Breast epithelium (tissue), 4 donors: ENCODE measurements at regions of chr9 and their contacts with region 1.

Region 1: DNA sequence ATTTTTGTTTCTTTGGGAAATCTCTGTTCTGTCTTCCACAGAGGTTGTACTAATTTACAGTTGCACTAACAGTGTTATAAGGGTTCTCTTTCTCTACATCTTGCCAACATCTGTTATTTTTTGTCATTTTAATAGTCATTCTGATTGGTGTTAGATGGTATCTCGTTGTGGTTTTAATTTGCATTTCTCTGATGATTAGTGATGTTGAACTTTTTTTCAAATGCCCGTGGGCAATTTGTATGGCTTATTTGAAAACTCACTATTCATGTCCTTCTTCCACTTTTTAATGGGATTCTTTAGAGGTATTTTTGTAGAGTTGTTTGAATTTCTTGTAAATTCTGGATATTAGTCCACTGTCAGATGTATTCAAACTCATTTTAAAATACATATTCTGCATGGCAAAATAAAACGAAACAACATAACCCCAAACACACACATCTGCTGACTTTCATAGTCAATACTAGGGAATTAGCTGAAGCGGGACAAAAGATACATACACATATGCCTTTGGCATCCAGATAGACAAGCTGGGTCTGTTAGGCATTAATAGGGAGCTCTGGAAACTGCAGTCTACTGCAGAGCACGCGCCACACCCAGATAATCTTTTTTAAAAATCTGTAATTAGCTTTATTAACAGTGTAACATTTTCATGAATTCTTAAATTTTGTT is 5.8 kb upstream of the SPATA31C2 start:
- DNase-seq: no peak
- H3K4me3 ChIP-seq: no peak overlapping the region
- H3K27ac ChIP-seq: no peak overlapping the region
- H3K4me1 ChIP-seq: no peaks in the 10 kb centered on the region
- H3K27me3 ChIP-seq: no peaks in the 10 kb centered on the region
- CTCF ChIP-seq: no peak
- POLR2A ChIP-seq: no peak

Region 2: GRCh38 chr9:88033359-88033702 is 110.8 kb before region 1 on chr9:
- intact Hi-C with region 1: loop called (anchors 5 kb)
- DNase-seq: no peak
- H3K4me3 ChIP-seq: no peak overlapping the region
- H3K27ac ChIP-seq: no peak overlapping the region
- H3K4me1 ChIP-seq: no peaks in the 10 kb centered on the region
- H3K27me3 ChIP-seq: no peaks in the 10 kb centered on the region
- CTCF ChIP-seq: no peak
- POLR2A ChIP-seq: no peak

Region 3: DNA sequence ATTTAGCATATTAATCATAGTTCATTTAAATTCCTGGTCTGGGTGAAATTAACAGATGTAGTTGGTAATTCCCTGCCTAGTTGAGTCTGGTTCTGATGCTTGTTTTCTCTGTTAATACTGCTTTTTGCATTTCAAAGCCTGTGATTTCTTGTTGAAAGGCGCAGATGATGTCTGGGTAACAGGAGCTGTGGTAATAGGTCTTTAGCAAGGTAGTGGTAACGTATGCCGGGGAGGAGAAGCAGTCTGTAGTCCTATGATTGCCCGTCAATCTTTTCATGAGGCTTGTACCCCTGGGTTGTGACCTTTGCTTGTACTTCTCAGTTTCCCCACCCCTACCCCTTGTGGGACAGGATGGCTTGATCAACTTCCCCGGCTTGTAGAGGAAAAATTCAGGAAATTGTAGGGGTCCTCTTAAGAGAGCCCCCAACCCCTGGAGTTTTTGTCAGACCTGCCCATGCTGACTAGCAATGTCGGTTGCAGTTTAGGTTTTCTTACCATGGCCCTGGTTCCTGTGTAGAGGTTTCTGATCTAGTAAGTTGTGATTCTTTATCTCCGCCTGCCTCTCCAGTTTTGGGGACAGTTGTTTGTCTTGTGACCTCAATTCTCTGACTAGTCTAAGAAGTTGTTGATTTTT is 299.5 kb after region 1 on chr9:
- intact Hi-C with region 1: no loop called
- DNase-seq: no peak
- H3K4me3 ChIP-seq: no peak overlapping the region
- H3K27ac ChIP-seq: no peak overlapping the region
- H3K4me1 ChIP-seq: no peaks in the 10 kb centered on the region
- H3K27me3 ChIP-seq: no peaks in the 10 kb centered on the region
- CTCF ChIP-seq: no peak
- POLR2A ChIP-seq: no peak